ENCODE measurements at regions of chr9 and their contacts with region 1.

Region 1: GRCh38 chr9:127561619-127562500 is 50.2 kb upstream of the STXBP1 start:
- DNase-seq: peak; percentile 89

Region 2: DNA sequence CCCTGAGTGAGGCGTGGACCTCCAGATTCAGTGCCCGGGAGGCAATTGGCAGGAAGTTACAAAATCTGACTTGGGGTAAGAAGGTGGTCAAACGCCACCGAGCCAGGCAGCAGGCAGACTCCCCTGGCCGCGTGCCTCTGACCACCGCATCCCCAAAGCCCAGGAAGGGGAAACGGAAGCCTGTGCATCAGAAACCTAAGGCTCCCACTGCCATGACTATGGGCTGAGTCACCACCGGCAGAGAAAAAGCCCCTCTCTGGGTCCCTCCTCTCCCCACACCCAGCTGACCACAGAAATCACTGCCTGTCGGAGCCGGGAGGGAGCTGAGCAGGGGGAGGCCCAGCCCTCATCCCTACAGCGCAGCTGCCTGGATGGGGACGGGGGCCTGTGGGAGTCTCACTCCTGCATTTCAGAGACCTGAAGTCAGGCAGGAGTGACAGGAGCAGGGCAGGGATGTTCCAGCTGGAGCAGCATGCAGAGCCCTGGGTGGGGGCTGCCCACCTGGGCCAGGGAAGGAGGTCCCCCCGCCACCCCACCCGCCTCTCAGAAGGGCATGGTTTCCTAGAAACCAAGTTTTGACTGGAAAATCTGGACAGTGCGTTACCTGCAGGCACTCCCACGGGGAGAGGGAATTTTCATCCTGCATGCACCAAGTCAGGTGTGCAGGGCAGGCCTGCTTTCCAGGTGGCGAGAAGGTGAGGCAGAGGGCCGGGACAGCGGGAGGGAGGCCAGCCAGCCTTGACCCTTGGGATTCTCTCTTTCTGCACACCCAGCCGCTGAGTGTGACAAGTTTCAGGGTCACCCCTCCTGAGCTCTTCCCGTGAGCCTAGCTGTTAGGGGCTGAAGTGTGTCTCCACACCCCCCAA is 42.3 kb before region 1 on chr9:
- intact Hi-C with region 1: loop called (anchors 5 kb)
- DNase-seq: no peak

Region 3: DNA sequence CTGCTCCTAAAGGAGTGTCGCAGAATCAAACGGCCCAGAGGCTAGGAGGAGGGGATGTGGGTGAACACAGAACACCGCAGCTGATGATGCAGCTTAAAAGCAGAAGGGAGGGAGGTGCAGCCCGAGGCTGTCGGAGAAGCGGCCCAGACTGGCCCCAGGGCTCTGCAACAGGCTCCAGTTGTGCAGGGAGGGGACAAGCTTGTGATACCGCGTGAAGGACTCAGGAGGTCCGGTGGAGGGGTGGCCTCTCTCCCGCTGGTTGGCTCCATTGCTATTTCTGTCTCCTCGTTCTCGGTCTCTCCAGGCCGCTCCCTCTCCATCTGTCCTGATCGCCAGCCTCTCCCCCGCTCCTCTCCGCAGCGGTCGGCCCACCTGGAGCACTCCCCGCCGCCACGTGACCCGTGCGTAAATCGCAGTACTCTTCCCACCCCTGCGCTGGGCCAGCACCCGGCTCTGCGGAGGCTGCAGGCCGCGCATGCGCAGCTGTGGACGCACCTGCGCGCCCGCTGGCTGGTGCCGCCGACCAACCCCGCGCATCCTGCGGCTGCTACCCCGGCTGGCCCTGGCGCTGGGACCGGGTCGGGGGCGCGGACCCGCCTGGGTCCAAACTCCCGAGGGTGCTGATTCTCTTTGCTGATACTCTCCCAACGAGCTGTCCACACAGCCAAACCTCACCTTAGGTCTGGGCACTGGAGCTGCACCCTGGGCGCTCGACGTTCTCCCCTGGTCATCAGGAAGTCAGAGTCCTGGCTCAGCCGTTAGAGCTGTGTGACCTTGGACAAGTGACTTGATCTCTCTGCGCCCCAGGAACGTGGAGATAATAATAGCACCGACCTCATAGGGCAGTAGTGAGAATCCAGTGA is 46.5 kb after region 1 on chr9:
- intact Hi-C with region 1: no loop called
- DNase-seq: peak; percentile 87

Region 4: GRCh38 chr9:127676636-127677035 is 114.8 kb after region 1 on chr9:
- intact Hi-C with region 1: no loop called
- DNase-seq: no peak

Measured in cardiac septum (tissue), 1 donor.